ENCODE measurements at regions of chr17 and their contacts with region 1.

Region 1: GRCh38 chr17:75109407-75110233 is at the start of gene ARMC7:
- DNase-seq: peak; percentile 95
- H3K4me3 ChIP-seq: peak within 1 kb of the TSS; percentile 71 to 90 (median 78)
- H3K27ac ChIP-seq: peak within 1 kb of the TSS; percentile 84 to 88 (median 86)
- H3K4me1 ChIP-seq: peaks cover 6 to 38% (median 25%) of the 10 kb centered on the region in 4 donors
- H3K27me3 ChIP-seq: no peaks in the 10 kb centered on the region
- CTCF ChIP-seq: peak in 1 of 5 experiments; percentile 3
- EP300 ChIP-seq: no peak
- POLR2A ChIP-seq: peak; percentile 88
- total RNA-seq, gene ARMC7: 8.2 to 41.1 (median 21.4) TPM

Region 2: GRCh38 chr17:75173526-75173925 is 63.9 kb after region 1 on chr17:
- in situ Hi-C with region 1: loop called in 3 of 4 experiments (anchors 10 kb)
- intact Hi-C with region 1: loop called (anchors 5 kb)
- DNase-seq: no peak
- H3K4me3 ChIP-seq: no peak overlapping the region
- H3K27ac ChIP-seq: no peak overlapping the region
- H3K4me1 ChIP-seq: peaks cover 0 to 3% (median 0%) of the 10 kb centered on the region in 4 donors
- H3K27me3 ChIP-seq: no peaks in the 10 kb centered on the region
- CTCF ChIP-seq: no peak
- EP300 ChIP-seq: no peak
- POLR2A ChIP-seq: no peak

Region 3: DNA sequence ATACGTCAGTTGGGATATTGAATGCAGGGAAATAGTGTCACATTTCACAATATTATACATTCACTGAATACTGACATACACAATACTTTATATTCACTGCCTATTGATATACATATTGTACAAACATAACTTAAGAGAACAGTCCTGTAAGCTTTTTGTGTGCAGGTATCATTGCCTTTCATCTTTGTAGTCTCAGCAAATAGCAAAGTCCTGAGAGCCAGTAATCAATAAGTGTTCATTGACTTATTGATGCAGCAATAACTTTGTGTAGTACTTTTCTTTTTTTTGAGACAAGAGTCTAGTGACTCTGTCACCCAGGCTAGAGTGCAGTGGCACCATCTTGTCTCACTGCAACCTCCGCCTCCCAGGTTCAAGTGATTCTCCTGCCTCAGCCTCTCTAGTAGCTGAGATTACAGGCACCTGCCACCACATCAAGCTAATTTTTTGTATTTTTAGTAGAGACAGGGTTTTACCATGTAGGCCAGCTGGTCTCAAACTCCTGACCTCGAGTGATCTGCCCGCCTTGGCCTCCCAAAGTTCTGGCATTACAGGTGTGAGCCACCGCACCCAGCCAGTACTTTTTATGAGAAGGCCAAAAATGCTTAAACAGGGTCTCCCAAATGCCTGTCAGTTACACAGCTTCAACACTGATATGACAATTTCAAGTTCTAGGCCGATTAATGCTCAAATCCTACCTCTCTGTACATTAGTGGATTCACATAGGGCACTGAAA is 90.4 kb after region 1 on chr17:
- in situ Hi-C with region 1: loop called in 1 of 4 experiments (anchors 10 kb)
- intact Hi-C with region 1: loop called (anchors 5 kb)
- DNase-seq: no peak
- H3K4me3 ChIP-seq: no peak overlapping the region
- H3K27ac ChIP-seq: no peak overlapping the region
- H3K4me1 ChIP-seq: peaks cover 0 to 14% (median 6%) of the 10 kb centered on the region in 4 donors
- H3K27me3 ChIP-seq: no peaks in the 10 kb centered on the region
- CTCF ChIP-seq: no peak
- EP300 ChIP-seq: no peak
- POLR2A ChIP-seq: no peak

Region 4: DNA sequence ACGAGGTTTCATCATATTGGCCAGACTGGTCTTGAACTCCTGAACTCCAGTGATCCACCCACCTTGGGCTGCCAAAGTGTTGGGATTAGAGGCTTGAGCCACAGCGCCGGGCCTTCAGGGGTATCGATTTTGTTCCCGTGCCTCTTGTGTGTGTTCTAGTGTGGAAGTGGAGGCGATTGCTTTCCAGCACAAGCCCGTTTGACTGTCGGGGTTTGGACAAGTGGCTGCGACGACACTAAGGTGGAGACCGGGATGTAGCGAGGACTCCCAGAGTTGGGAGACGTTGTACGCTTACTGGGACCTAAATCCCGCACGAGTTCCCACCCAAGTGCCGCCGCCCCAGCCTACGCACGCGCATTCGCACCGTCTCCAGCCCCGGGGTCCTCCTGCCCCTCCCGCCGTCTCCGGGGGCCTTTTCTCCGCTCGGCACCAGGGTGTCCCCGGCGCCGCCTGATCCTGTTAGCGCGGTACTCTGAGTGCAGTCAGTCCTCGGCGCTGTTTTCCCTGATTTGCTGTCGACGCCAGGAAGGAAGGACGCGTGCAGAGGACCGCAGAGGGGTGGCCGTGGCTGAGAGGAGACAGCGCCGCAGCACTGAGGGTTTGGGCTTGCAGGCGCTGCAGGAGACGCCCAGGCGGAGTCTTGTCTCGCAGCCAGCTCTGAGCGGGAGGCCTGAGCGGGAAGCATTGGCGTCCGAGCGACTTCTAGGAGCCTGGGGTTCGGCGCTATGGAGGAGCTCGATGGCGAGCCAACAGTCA is 95.6 kb after region 1 on chr17 and contains the start of gene NUP85:
- in situ Hi-C with region 1: loop called in 1 of 4 experiments (anchors 10 kb)
- intact Hi-C with region 1: loop called (anchors 5 kb)
- DNase-seq: peak; percentile 95
- H3K4me3 ChIP-seq: peak within 1 kb of the TSS; percentile 73 to 90 (median 88)
- H3K27ac ChIP-seq: peak within 1 kb of the TSS; percentile 90 to 95 (median 94)
- H3K4me1 ChIP-seq: peaks cover 11 to 34% (median 21%) of the 10 kb centered on the region in 4 donors
- H3K27me3 ChIP-seq: no peaks in the 10 kb centered on the region
- CTCF ChIP-seq: no peak
- EP300 ChIP-seq: no peak
- POLR2A ChIP-seq: peak; percentile 74
- total RNA-seq, gene NUP85: 13.1 to 204 (median 31.8) TPM

Region 5: GRCh38 chr17:75238684-75239191 is 129.1 kb after region 1 on chr17:
- in situ Hi-C with region 1: no loop called
- intact Hi-C with region 1: no loop called
- DNase-seq: peak; percentile 61
- H3K4me3 ChIP-seq: no peak overlapping the region
- H3K27ac ChIP-seq: no peak overlapping the region
- H3K4me1 ChIP-seq: no peaks in the 10 kb centered on the region
- H3K27me3 ChIP-seq: no peaks in the 10 kb centered on the region
- CTCF ChIP-seq: peak; percentile 74 to 85 (median 77)
- EP300 ChIP-seq: no peak
- POLR2A ChIP-seq: no peak

Region 6: DNA sequence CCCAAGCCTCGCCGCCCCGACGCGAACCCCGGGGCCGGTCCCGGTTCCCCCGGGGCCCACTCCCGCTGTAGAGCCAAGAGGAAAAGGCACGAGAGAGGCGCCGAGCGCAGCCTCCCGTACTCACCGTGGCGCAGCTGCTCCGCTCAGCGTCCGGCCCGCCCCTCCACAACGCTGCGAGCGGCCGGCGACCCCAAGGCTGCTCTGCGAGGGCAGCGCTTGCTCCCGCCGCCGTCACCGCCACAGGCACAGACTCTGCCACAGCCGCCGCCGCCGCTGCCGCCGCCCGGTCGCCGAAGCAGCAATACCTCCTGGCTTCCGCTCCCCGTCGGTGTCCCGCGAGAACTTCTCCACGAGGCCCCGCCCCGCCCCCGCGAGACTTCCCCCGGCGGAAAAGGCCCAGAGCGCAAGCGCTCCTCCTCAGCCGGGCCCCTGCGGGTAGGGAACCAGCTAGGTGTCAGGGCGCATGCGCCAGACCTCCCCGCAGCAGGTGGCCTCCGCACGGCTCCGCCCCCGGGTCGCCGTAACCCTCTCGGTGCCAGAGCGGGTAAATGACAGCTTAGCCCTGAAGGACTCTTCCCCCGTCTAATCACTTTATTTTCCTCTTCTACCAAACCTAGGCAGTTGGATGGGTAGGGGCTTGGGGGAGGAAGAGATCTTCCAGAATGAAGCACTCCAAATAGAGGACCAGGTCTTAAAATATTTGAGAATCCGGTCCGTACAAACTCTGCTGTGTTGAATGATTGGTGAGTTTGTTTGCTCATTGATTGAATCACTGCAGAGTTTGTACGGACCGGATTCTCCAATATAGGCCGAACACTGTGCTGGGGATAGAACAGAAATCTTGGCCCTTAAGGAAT is 296.0 kb after region 1 on chr17 and contains the start of gene GRB2:
- in situ Hi-C with region 1: no loop called
- intact Hi-C with region 1: loop called (anchors 10 kb)
- DNase-seq: peak; percentile 100
- H3K4me3 ChIP-seq: peak within 1 kb of the TSS; percentile 85 to 97 (median 93)
- H3K27ac ChIP-seq: peak within 1 kb of the TSS; percentile 96 to 98 (median 97)
- H3K4me1 ChIP-seq: peaks cover 12 to 36% (median 16%) of the 10 kb centered on the region in 4 donors
- H3K27me3 ChIP-seq: no peaks in the 10 kb centered on the region
- CTCF ChIP-seq: peak in 2 of 5 experiments; percentile 13 to 23
- EP300 ChIP-seq: no peak
- POLR2A ChIP-seq: peak; percentile 94
- total RNA-seq, gene GRB2: 105 to 183 (median 136) TPM